ENCODE measurements at regions of chr2 and their contacts with region 1.

Region 1: GRCh38 chr2:7427293-7428060 is 510.3 kb downstream of the RNF144A start:
- DNase-seq: no peak

Region 2: GRCh38 chr2:7795778-7796563 is 368.5 kb after region 1 on chr2:
- intact Hi-C with region 1: no loop called
- DNase-seq: no peak

Region 3: GRCh38 chr2:8685697-8686358 is 1258.4 kb after region 1 on chr2:
- intact Hi-C with region 1: loop called (anchors 5 kb)
- DNase-seq: peak; percentile 93